ENCODE measurements at regions of chr22 and their contacts with region 1.

Region 1: DNA sequence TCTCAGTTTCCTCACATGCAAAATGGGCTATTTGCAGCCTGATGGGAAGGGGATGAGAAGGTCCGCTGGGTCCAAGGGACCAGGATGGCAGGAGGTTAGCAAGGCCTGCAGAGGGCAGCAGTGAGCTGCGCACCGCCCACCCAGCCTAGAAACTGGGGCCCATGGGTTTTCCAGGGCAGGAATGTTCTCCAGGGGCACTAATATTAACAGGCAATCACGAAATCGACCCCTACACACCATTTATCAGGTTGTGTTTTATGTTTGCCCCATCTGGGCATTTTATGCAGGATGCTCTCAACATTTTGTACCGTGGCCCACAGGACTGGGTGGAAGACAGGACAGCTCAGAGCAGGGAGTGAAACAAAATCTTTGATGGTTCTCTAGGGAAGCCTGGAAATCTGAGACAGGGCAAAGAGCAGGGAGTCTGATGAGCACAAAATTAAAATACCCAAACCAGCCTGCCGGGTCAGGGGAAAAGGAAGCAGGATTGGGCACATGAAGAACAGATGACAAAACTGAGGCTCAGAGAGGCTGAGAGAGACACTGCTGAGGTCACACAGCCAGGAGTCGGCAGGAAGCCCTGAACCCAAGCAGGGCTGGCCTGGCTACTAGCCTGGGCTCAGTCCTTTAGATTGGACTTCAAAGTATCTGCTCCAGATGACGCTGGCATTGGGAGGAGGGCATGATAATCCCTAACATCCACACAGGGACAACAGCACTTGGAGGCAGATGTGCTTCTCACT is 1.6 kb upstream of the BCR start:
- DNase-seq: peak; percentile 64
- H3K4me3 ChIP-seq: no peak overlapping the region
- H3K27ac ChIP-seq: no peak overlapping the region
- H3K4me1 ChIP-seq: peaks cover 21% of the 10 kb centered on the region
- H3K27me3 ChIP-seq: no peaks in the 10 kb centered on the region
- CTCF ChIP-seq: peak; percentile 93

Region 2: GRCh38 chr22:23054531-23055257 is 124.0 kb before region 1 on chr22:
- intact Hi-C with region 1: no loop called
- DNase-seq: peak; percentile 15
- H3K4me3 ChIP-seq: no peak overlapping the region
- H3K27ac ChIP-seq: no peak overlapping the region
- H3K4me1 ChIP-seq: no peaks in the 10 kb centered on the region
- H3K27me3 ChIP-seq: no peaks in the 10 kb centered on the region
- CTCF ChIP-seq: no peak

Region 3: DNA sequence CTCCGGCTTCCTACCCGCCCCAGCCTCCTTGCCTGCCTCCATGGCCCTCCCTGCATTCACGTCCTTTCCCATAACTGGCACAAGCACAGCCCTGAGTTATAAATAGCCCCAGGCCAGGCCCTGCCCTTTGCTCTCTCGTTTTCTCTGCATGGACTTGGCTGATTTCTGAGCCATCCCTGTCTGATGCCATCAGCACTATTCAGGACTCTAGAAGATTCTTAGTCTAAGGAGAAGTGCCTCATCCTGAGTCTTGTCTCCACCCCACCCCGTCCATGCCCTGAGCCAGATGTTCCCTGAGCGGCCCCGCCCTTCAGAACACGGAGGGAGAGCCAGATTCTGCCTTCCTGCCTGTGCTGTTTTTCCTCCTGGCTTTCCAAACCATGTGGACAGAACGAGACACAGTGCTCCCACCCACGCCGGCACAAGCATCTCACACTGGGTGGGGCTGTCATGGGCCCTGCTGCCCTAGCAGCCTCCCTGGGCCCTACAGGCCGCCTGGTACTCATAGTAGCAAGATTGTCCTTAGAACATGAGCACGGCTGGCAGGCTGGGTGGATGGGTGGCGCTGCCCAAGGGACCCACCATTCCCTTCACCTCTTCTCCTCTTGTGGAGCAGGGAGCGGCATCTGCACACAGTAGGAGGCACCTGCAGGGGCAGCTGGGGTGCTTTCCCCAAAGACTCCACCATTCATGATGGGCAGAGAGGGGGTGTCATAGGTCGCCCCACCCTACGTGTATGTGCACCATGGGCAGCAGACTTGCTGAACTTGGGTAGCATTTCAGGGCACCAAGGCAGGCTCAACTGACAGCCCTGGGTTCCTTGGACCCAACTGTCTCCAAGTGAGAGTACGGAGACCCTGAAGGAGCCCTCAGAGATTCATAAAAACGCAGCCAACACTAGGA is 78.6 kb after region 1 on chr22:
- intact Hi-C with region 1: no loop called
- DNase-seq: peak; percentile 74
- H3K4me3 ChIP-seq: no peak overlapping the region
- H3K27ac ChIP-seq: peak overlapping the region; percentile 60
- H3K4me1 ChIP-seq: peaks cover 6% of the 10 kb centered on the region
- H3K27me3 ChIP-seq: no peaks in the 10 kb centered on the region
- CTCF ChIP-seq: no peak

Region 4: GRCh38 chr22:23281406-23282088 is 102.9 kb after region 1 on chr22:
- intact Hi-C with region 1: loop called (anchors 2 kb)
- DNase-seq: peak; percentile 84
- H3K4me3 ChIP-seq: no peak overlapping the region
- H3K27ac ChIP-seq: no peak overlapping the region
- H3K4me1 ChIP-seq: peaks cover 14% of the 10 kb centered on the region
- H3K27me3 ChIP-seq: no peaks in the 10 kb centered on the region
- CTCF ChIP-seq: peak; percentile 87

Measured in colonic mucosa (tissue), 4 donors.